WTC11 (cell line): ENCODE measurements at regions of chr22 and their contacts with region 1.

Region 1: DNA sequence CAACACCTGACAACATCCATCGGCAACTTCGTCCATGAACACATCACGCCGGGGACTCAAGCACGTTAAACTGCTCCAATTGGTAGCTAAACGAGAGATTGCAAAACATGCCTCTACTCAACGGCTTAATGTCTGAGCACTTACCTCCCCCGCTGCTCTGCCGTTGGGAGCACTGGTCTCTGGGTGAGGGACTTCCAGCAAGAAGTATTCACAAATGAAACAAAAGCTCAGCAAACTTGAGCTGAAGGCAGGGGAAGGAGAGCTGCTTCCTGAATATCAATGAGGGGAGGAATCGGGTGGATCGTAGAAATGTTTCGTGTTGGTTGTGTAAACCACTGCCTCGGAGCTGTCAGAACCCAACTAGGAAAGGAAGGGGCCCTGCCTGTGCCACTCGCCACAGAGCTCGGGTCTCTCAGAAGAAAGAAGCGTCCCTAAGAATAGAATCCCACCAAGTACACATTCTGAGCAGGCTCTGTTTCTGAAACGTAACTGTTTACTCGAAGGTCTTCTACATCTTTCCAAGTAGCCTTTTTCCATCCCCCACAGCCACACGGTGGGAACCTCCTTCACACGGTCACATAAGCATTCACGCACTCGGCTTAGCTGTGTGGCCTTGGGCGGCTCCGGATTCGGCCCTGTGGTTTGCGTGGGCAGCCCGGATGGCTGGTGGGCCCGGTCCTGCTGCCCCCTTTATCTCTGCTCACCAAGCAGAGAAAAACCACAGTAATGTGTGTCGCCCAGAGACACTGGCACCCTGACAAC is at the start of gene MLC1:
- DNase-seq: no peak
- ATAC-seq: peak; percentile 55
- H3K4me3 Mint-ChIP-seq: peak within 1 kb of the TSS; percentile 22
- H3K27ac Mint-ChIP-seq: no peak within 1 kb of the TSS
- H3K4me1 Mint-ChIP-seq: no peaks in the 10 kb centered on the region; the same call in 1 of the 2 replicates
- H3K27me3 Mint-ChIP-seq: peaks cover 8% of the 10 kb centered on the region; the same call in 1 of the 2 replicates
- CTCF ChIP-seq: no peak
- total RNA-seq, gene MLC1: 0.13 to 0.16 TPM (median 0.16 TPM) in 3 replicates

Region 2: GRCh38 chr22:50098052-50098451 is 12.7 kb after region 1 on chr22:
- CTCF ChIA-PET with region 1: no interaction called
- POLR2A ChIA-PET with region 1: no interaction called
- DNase-seq: no peak
- ATAC-seq: no peak
- H3K4me3 Mint-ChIP-seq: no peak overlapping the region
- H3K27ac Mint-ChIP-seq: no peak overlapping the region
- H3K4me1 Mint-ChIP-seq: no peaks in the 10 kb centered on the region
- H3K27me3 Mint-ChIP-seq: no peaks in the 10 kb centered on the region
- CTCF ChIP-seq: no peak

Region 3: GRCh38 chr22:50141891-50142363 is 56.5 kb after region 1 on chr22:
- CTCF ChIA-PET with region 1: interaction called, 11 read pairs
- POLR2A ChIA-PET with region 1: no interaction called
- DNase-seq: peak; percentile 41
- ATAC-seq: peak; percentile 74
- H3K4me3 Mint-ChIP-seq: no peak overlapping the region
- H3K27ac Mint-ChIP-seq: no peak overlapping the region
- H3K4me1 Mint-ChIP-seq: peaks cover 2% of the 10 kb centered on the region; the same call in 1 of the 2 replicates
- H3K27me3 Mint-ChIP-seq: no peaks in the 10 kb centered on the region
- CTCF ChIP-seq: peak; percentile 28; the same call in 1 of the 2 replicates